Caco-2 (cell line): ENCODE measurements at regions of chr22 and their contacts with region 1.

Region 1: GRCh38 chr22:39502109-39502788 is at the start of gene MIEF1:
- DNase-seq: peak; percentile 96 to 97
- H3K4me3 ChIP-seq: peak within 1 kb of the TSS; percentile 94
- H3K4me3 Mint-ChIP-seq: peak within 1 kb of the TSS; percentile 78
- H3K27ac Mint-ChIP-seq: peak within 1 kb of the TSS; percentile 62
- H3K4me1 ChIP-seq: peaks cover 6% of the 10 kb centered on the region
- H3K4me1 Mint-ChIP-seq: peaks cover 29% of the 10 kb centered on the region
- H3K27me3 ChIP-seq: no peaks in the 10 kb centered on the region
- H3K27me3 Mint-ChIP-seq: no peaks in the 10 kb centered on the region
- CTCF ChIP-seq: no peak
- total RNA-seq, gene MIEF1: 47.4 and 49.4 TPM in 2 replicates

Region 2: GRCh38 chr22:39384750-39385480 is 117.3 kb before region 1 on chr22:
- CTCF ChIA-PET with region 1: no interaction called
- POLR2A ChIA-PET with region 1: no interaction called
- intact Hi-C with region 1: no loop called
- DNase-seq: no peak
- H3K4me3 ChIP-seq: no peak overlapping the region
- H3K4me3 Mint-ChIP-seq: no peak overlapping the region
- H3K27ac Mint-ChIP-seq: no peak overlapping the region
- H3K4me1 ChIP-seq: no peaks in the 10 kb centered on the region
- H3K4me1 Mint-ChIP-seq: no peaks in the 10 kb centered on the region
- H3K27me3 ChIP-seq: no peaks in the 10 kb centered on the region
- H3K27me3 Mint-ChIP-seq: no peaks in the 10 kb centered on the region
- CTCF ChIP-seq: peak in 1 of 2 experiments; percentile 43

Region 3: GRCh38 chr22:39490135-39490798 is 12.0 kb before region 1 on chr22:
- CTCF ChIA-PET with region 1: interaction called, 7 read pairs
- POLR2A ChIA-PET with region 1: no interaction called
- intact Hi-C with region 1: loop called (anchors 1 kb)
- DNase-seq: peak; percentile 75 to 84
- H3K4me3 ChIP-seq: no peak overlapping the region
- H3K4me3 Mint-ChIP-seq: no peak overlapping the region
- H3K27ac Mint-ChIP-seq: no peak overlapping the region
- H3K4me1 ChIP-seq: peaks cover 16% of the 10 kb centered on the region
- H3K4me1 Mint-ChIP-seq: peaks cover 17% of the 10 kb centered on the region
- H3K27me3 ChIP-seq: no peaks in the 10 kb centered on the region
- H3K27me3 Mint-ChIP-seq: no peaks in the 10 kb centered on the region
- CTCF ChIP-seq: no peak